Naive thymus-derived CD4-positive, alpha-beta T cell (primary cell): ENCODE measurements at regions of chr14 and their contacts with region 1.

Region 1: GRCh38 chr14:37874429-37875191 is 279.2 kb downstream of the TTC6 start:
- DNase-seq: peak; percentile 43 to 81 (median 71)
- ATAC-seq: peak; percentile 94
- H3K4me3 ChIP-seq: no peak overlapping the region
- H3K4me3 Mint-ChIP-seq: no peak overlapping the region
- H3K27ac ChIP-seq: no peak overlapping the region
- H3K27ac Mint-ChIP-seq: peak overlapping the region in 4 of 9 donors; percentile 28 to 74 (median 42)
- H3K4me1 ChIP-seq: peaks cover 0 to 5% of the 10 kb centered on the region in 2 donors
- H3K4me1 Mint-ChIP-seq: peaks cover 6 to 8% (median 7%) of the 10 kb centered on the region in 7 donors
- H3K27me3 ChIP-seq: no peaks in the 10 kb centered on the region
- H3K27me3 Mint-ChIP-seq: peaks cover 0 to 16% (median 5%) of the 10 kb centered on the region in 5 donors

Region 2: GRCh38 chr14:37230551-37231194 is 643.9 kb before region 1 on chr14:
- CTCF ChIA-PET with region 1: no interaction called
- POLR2A ChIA-PET with region 1: no interaction called
- intact Hi-C with region 1: loop called (anchors 1 kb)
- DNase-seq: peak in 5 of 9 donors; percentile 3 to 34 (median 5)
- ATAC-seq: no peak
- H3K4me3 ChIP-seq: no peak overlapping the region
- H3K4me3 Mint-ChIP-seq: no peak overlapping the region
- H3K27ac ChIP-seq: no peak overlapping the region
- H3K27ac Mint-ChIP-seq: no peak overlapping the region
- H3K4me1 ChIP-seq: no peaks in the 10 kb centered on the region
- H3K4me1 Mint-ChIP-seq: no peaks in the 10 kb centered on the region
- H3K27me3 ChIP-seq: no peaks in the 10 kb centered on the region
- H3K27me3 Mint-ChIP-seq: peaks cover 0 to 4% (median 0%) of the 10 kb centered on the region in 5 donors

Region 3: DNA sequence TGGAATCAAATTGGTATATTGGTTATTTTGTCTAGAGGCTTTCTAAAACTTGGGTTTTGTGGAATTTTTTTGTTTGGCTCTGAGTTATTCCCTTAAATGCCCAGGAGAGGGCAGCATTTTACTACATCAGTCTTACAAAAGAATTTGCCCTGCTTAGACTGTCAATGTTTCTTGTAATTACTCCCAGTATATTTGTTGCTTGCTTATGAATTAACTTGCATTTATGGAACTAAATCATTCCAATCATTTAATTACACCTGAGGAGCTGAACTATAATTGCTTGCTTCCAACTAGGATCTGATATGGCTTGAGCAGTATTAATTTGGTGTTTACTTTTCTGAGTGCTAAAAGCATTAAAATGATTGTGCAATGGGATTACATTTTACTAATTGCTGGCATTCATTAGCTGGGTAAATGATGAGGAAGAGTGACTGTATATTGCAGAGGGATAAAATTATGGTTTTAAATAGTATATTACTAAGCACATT is 628.1 kb before region 1 on chr14:
- CTCF ChIA-PET with region 1: no interaction called
- POLR2A ChIA-PET with region 1: no interaction called
- intact Hi-C with region 1: loop called in 1 of 2 experiments (anchors 1 kb)
- DNase-seq: peak in 5 of 9 donors; percentile 1 to 9 (median 4)
- ATAC-seq: no peak
- H3K4me3 ChIP-seq: no peak overlapping the region
- H3K4me3 Mint-ChIP-seq: no peak overlapping the region
- H3K27ac ChIP-seq: no peak overlapping the region
- H3K27ac Mint-ChIP-seq: no peak overlapping the region
- H3K4me1 ChIP-seq: no peaks in the 10 kb centered on the region
- H3K4me1 Mint-ChIP-seq: no peaks in the 10 kb centered on the region
- H3K27me3 ChIP-seq: no peaks in the 10 kb centered on the region
- H3K27me3 Mint-ChIP-seq: peaks cover 0 to 3% (median 0%) of the 10 kb centered on the region in 5 donors

Region 4: DNA sequence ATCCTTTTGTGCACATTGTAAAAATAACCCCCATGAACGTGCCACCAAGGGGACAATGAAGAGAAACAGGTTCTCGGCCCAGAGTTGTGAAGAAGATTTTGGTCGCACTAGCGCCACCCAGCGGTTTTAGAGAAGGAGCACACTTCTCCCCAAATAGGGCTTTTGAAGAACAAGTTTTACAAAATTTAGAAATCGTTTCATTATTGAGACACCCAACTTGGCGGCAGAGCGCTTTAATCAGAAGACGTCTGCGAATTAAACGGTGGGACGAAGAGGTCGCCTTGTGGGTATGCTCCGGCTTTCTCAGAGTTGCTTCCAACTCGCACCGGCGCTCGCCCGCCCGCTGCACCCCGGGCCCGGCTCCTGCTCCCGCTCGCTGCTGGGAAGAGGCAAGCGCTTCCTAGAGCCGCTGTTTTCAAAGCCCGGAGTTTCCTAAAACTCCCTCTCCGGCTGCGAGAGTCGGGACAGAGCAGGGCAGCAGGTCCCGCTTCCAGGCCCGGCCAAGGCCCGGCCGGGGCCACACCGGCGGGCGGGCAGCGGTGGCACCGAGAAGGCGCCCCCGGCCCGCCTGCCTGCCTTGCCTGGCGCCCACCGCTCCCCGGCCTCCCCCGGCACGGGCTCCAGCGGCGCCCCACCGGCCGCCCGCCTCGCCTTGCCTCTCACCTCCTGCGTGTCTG is 280.2 kb before region 1 on chr14:
- CTCF ChIA-PET with region 1: no interaction called
- POLR2A ChIA-PET with region 1: no interaction called
- intact Hi-C with region 1: loop called in 1 of 2 experiments (anchors 10 kb)
- DNase-seq: no peak
- ATAC-seq: no peak
- H3K4me3 ChIP-seq: no peak overlapping the region
- H3K4me3 Mint-ChIP-seq: peak overlapping the region; percentile 54 to 82 (median 70)
- H3K27ac ChIP-seq: no peak overlapping the region
- H3K27ac Mint-ChIP-seq: peak overlapping the region in 2 of 9 donors; percentile 4 to 72
- H3K4me1 ChIP-seq: no peaks in the 10 kb centered on the region
- H3K4me1 Mint-ChIP-seq: peaks cover 7 to 42% (median 26%) of the 10 kb centered on the region in 7 donors
- H3K27me3 ChIP-seq: peaks cover 4 to 21% of the 10 kb centered on the region in 2 donors
- H3K27me3 Mint-ChIP-seq: peaks cover 72 to 81% (median 77%) of the 10 kb centered on the region in 5 donors

Region 5: GRCh38 chr14:37709419-37710195 is 165.0 kb before region 1 on chr14:
- CTCF ChIA-PET with region 1: no interaction called
- POLR2A ChIA-PET with region 1: no interaction called
- intact Hi-C with region 1: loop called in 1 of 2 experiments (anchors 5 kb)
- DNase-seq: no peak
- ATAC-seq: no peak
- H3K4me3 ChIP-seq: no peak overlapping the region
- H3K4me3 Mint-ChIP-seq: no peak overlapping the region
- H3K27ac ChIP-seq: no peak overlapping the region
- H3K27ac Mint-ChIP-seq: no peak overlapping the region
- H3K4me1 ChIP-seq: no peaks in the 10 kb centered on the region
- H3K4me1 Mint-ChIP-seq: no peaks in the 10 kb centered on the region
- H3K27me3 ChIP-seq: no peaks in the 10 kb centered on the region
- H3K27me3 Mint-ChIP-seq: peaks cover 0 to 9% (median 4%) of the 10 kb centered on the region in 5 donors

Region 6: GRCh38 chr14:37855871-37856270 is 18.7 kb before region 1 on chr14:
- CTCF ChIA-PET with region 1: no interaction called
- POLR2A ChIA-PET with region 1: no interaction called
- intact Hi-C with region 1: no loop called
- DNase-seq: no peak
- ATAC-seq: no peak
- H3K4me3 ChIP-seq: no peak overlapping the region
- H3K4me3 Mint-ChIP-seq: no peak overlapping the region
- H3K27ac ChIP-seq: no peak overlapping the region
- H3K27ac Mint-ChIP-seq: no peak overlapping the region
- H3K4me1 ChIP-seq: no peaks in the 10 kb centered on the region
- H3K4me1 Mint-ChIP-seq: no peaks in the 10 kb centered on the region
- H3K27me3 ChIP-seq: no peaks in the 10 kb centered on the region
- H3K27me3 Mint-ChIP-seq: peaks cover 0 to 31% (median 22%) of the 10 kb centered on the region in 5 donors

Region 7: GRCh38 chr14:37948266-37948665 is 73.7 kb after region 1 on chr14:
- CTCF ChIA-PET with region 1: no interaction called
- POLR2A ChIA-PET with region 1: no interaction called
- intact Hi-C with region 1: no loop called
- DNase-seq: no peak
- ATAC-seq: no peak
- H3K4me3 ChIP-seq: no peak overlapping the region
- H3K4me3 Mint-ChIP-seq: no peak overlapping the region
- H3K27ac ChIP-seq: no peak overlapping the region
- H3K27ac Mint-ChIP-seq: no peak overlapping the region
- H3K4me1 ChIP-seq: no peaks in the 10 kb centered on the region
- H3K4me1 Mint-ChIP-seq: no peaks in the 10 kb centered on the region
- H3K27me3 ChIP-seq: no peaks in the 10 kb centered on the region
- H3K27me3 Mint-ChIP-seq: no peaks in the 10 kb centered on the region